Transverse colon (tissue), 4 donors: ENCODE measurements at regions of chr6 and their contacts with region 1.

Region 1: GRCh38 chr6:100664274-100665040 is 199.7 kb upstream of the SIM1 start:
- DNase-seq: no peak
- H3K4me3 ChIP-seq: no peak overlapping the region
- H3K27ac ChIP-seq: no peak overlapping the region
- H3K4me1 ChIP-seq: no peaks in the 10 kb centered on the region
- H3K27me3 ChIP-seq: no peaks in the 10 kb centered on the region
- CTCF ChIP-seq: peak; percentile 42 to 68 (median 59)
- EP300 ChIP-seq: no peak
- POLR2A ChIP-seq: no peak

Region 2: GRCh38 chr6:100116411-100117194 is 547.9 kb before region 1 on chr6:
- in situ Hi-C with region 1: loop called in 3 of 4 experiments (anchors 10 to 25 kb)
- intact Hi-C with region 1: loop called (anchors 10 kb)
- DNase-seq: peak; percentile 12
- H3K4me3 ChIP-seq: no peak overlapping the region
- H3K27ac ChIP-seq: no peak overlapping the region
- H3K4me1 ChIP-seq: no peaks in the 10 kb centered on the region
- H3K27me3 ChIP-seq: peaks cover 5% of the 10 kb centered on the region
- CTCF ChIP-seq: peak; percentile 41 to 48 (median 45)
- EP300 ChIP-seq: no peak
- POLR2A ChIP-seq: no peak

Region 3: DNA sequence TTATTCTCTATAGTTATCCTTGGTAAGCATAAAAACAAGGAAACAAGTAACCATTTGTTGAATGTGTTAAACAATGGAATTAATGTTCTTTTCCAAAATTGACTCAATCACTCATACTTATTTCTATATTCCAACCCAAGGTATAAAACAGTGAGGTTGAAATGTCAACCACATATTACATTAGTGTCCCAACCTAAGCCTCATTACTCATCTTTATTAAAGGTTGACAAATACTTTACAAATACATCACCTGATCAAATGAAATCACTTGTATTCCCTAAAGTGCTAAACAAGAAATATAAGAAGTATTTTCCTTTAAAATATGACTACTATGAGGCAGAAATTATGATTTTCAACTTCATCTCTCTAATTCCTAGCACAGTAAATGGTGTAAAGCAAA is 116.2 kb after region 1 on chr6:
- in situ Hi-C with region 1: no loop called
- intact Hi-C with region 1: no loop called
- DNase-seq: no peak
- H3K4me3 ChIP-seq: no peak overlapping the region
- H3K27ac ChIP-seq: no peak overlapping the region
- H3K4me1 ChIP-seq: no peaks in the 10 kb centered on the region
- H3K27me3 ChIP-seq: no peaks in the 10 kb centered on the region
- CTCF ChIP-seq: no peak
- EP300 ChIP-seq: no peak
- POLR2A ChIP-seq: no peak